Posterior vena cava (tissue), 2 donors: ENCODE measurements at regions of chr4 and their contacts with region 1.

Region 1: GRCh38 chr4:78481180-78481579 is 70.4 kb upstream of the ANXA3 start:
- DNase-seq: no peak

Region 2: GRCh38 chr4:79682801-79683530 is 1201.8 kb after region 1 on chr4:
- intact Hi-C with region 1: loop called in 1 of 2 experiments (anchors 10 kb)
- DNase-seq: peak; percentile 76